Activated B cell treated with CpG ODN at 0.5 μM for 24 hours (primary cell): ENCODE measurements at regions of chr2 and their contacts with region 1.

Region 1: DNA sequence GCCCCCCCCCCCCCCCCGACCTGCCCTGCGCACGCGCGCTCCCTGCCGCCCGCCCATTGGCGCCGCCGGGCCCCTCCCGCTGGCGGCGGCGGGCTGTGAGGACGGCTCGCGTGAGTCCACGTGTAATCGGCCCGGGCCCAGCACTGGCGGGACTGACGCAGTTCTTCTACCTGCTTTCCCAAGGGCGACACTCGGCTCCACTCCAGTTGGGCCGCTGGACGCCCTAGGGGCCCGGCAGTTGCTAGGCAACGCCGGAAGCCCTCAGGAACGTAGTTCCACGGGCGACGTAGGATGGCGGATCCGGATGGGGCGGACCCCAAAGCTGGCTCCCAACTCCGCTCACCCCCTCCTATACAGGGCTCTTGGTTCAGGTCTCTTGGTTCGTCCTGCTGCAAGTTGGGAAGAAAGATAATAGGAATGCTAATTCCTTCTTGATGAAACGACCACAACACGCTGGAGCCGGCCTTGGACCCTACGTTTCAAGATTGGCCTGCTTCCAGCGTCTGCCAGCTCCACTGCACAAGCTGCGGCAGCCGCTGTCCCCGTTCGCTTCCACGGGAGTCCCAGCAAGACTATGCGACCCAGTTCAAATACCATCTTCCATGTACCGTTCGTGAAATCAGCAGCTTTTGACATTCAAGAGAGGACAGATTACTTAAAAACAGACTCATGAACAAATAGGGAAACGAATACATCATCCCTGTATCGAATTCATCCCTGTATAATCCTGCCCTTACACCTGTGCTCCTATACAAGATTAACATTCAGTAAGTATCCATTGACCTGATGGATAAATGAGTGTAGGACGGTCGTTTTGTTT is 415 bp upstream of the MCFD2 start:
- DNase-seq: peak; percentile 80
- ATAC-seq: peak; percentile 83
- H3K4me3 Mint-ChIP-seq: peak overlapping the region; percentile 90
- H3K27ac Mint-ChIP-seq: peak overlapping the region; percentile 81
- H3K4me1 Mint-ChIP-seq: peaks cover 65% of the 10 kb centered on the region
- H3K27me3 Mint-ChIP-seq: no peaks in the 10 kb centered on the region
- CTCF ChIP-seq: no peak

Region 2: GRCh38 chr2:46929612-46930011 is 13.6 kb after region 1 on chr2:
- CTCF ChIA-PET with region 1: interaction called, 13 read pairs
- POLR2A ChIA-PET with region 1: interaction called, 4 read pairs
- intact Hi-C with region 1: no loop called
- DNase-seq: no peak
- ATAC-seq: no peak
- H3K4me3 Mint-ChIP-seq: no peak overlapping the region
- H3K27ac Mint-ChIP-seq: no peak overlapping the region
- H3K4me1 Mint-ChIP-seq: peaks cover 29% of the 10 kb centered on the region
- H3K27me3 Mint-ChIP-seq: no peaks in the 10 kb centered on the region
- CTCF ChIP-seq: no peak

Region 3: GRCh38 chr2:47098953-47099352 is 182.9 kb after region 1 on chr2:
- CTCF ChIA-PET with region 1: no interaction called
- POLR2A ChIA-PET with region 1: no interaction called
- intact Hi-C with region 1: no loop called
- DNase-seq: no peak
- ATAC-seq: no peak
- H3K4me3 Mint-ChIP-seq: no peak overlapping the region
- H3K27ac Mint-ChIP-seq: no peak overlapping the region
- H3K4me1 Mint-ChIP-seq: no peaks in the 10 kb centered on the region
- H3K27me3 Mint-ChIP-seq: no peaks in the 10 kb centered on the region
- CTCF ChIP-seq: no peak

Region 4: DNA sequence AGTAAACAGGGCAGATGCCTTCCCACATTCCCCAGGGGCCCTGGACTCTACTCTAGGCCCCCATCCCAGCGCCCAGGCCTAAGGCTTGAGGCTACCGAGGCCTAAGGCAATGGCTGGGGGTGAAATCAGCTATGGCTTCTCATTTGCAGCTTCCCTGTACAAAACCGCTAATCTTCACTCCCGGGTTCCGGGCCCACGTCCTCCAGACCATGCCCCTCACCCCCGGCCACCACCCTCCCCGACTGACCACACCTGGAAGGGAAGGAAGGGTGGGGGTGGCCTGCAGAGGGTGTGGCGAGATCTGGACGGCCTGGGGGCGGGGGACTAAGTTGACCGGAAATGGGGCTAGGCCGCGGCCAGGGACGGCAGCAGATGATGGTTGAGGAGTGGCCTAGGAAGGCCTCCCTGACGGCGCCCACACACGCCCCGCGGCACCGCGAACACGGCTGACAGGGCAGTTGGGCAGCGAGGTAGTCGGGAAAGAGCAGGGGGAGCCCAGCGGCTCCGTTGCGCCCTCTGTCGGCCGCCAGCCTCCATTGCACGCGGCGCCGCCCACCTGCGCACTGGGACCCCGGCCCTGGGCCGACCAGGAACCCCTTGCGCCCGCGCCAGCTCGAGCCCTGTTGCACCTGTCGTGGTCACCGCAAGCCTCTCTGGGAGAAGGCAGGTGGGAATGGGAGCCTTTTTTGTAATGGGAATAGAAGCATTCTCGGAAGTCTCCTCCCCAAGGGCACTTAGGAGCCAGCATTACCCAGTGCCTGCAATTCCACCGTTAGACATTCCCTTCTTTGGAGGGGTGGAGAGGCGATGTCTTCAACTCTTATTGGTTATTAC is 356.2 kb after region 1 on chr2:
- CTCF ChIA-PET with region 1: no interaction called
- POLR2A ChIA-PET with region 1: no interaction called
- intact Hi-C with region 1: loop called (anchors 1 kb)
- DNase-seq: peak; percentile 68
- ATAC-seq: peak; percentile 92
- H3K4me3 Mint-ChIP-seq: peak overlapping the region; percentile 76
- H3K27ac Mint-ChIP-seq: peak overlapping the region; percentile 52
- H3K4me1 Mint-ChIP-seq: peaks cover 25% of the 10 kb centered on the region
- H3K27me3 Mint-ChIP-seq: no peaks in the 10 kb centered on the region
- CTCF ChIP-seq: peak; percentile 96